Left ventricle myocardium superior (tissue), 1 donor: ENCODE measurements at regions of chr16 and their contacts with region 1.

Region 1: GRCh38 chr16:74862741-74863244 is 88.2 kb upstream of the FA2H start:
- DNase-seq: no peak
- ATAC-seq: peak; percentile 38

Region 2: GRCh38 chr16:74709441-74709877 is 153.3 kb before region 1 on chr16:
- intact Hi-C with region 1: loop called (anchors 10 kb)
- DNase-seq: peak; percentile 86
- ATAC-seq: peak; percentile 92

Region 3: GRCh38 chr16:74793571-74793970 is 69.2 kb before region 1 on chr16:
- intact Hi-C with region 1: no loop called
- DNase-seq: no peak
- ATAC-seq: no peak